ENCODE measurements at regions of chr7 and their contacts with region 1.

Region 1: DNA sequence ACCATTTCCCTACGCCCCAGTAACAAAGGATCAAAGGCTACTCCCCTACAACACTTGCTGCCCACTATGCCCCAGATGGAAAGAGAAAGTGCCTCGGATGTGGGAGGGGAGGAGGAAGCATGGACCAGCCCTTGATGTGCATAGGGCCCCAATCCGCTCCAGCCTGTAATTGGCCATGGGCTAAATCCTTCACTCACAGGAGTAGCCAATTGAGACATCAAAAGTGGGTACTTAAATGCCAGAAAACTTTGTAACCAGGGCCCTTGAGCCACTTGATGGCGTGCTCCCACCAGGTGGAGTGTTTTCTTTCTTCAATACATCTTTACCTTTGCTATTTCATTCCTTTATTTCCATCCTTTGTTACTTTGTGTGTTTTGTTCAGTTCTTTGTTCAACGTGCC is 500.5 kb upstream of the LRRN3 start:
- DNase-seq: peak in 3 of 14 experiments; percentile 7 to 15 (median 14)
- ATAC-seq: no peak
- H3K4me3 ChIP-seq: no peak overlapping the region
- H3K4me3 Mint-ChIP-seq: no peak overlapping the region
- H3K27ac ChIP-seq: no peak overlapping the region
- H3K27ac Mint-ChIP-seq: no peak overlapping the region
- H3K4me1 ChIP-seq: no peaks in the 10 kb centered on the region
- H3K4me1 Mint-ChIP-seq: no peaks in the 10 kb centered on the region
- H3K27me3 ChIP-seq: no peaks in the 10 kb centered on the region
- H3K27me3 Mint-ChIP-seq: no peaks in the 10 kb centered on the region
- CTCF ChIP-seq: no peak

Region 2: GRCh38 chr7:110534241-110534931 is 56.0 kb before region 1 on chr7:
- CTCF ChIA-PET with region 1: no interaction called
- POLR2A ChIA-PET with region 1: no interaction called
- intact Hi-C with region 1: no loop called
- DNase-seq: no peak
- ATAC-seq: no peak
- H3K4me3 ChIP-seq: no peak overlapping the region
- H3K4me3 Mint-ChIP-seq: no peak overlapping the region
- H3K27ac ChIP-seq: no peak overlapping the region
- H3K27ac Mint-ChIP-seq: no peak overlapping the region
- H3K4me1 ChIP-seq: no peaks in the 10 kb centered on the region
- H3K4me1 Mint-ChIP-seq: no peaks in the 10 kb centered on the region
- H3K27me3 ChIP-seq: no peaks in the 10 kb centered on the region
- H3K27me3 Mint-ChIP-seq: no peaks in the 10 kb centered on the region
- CTCF ChIP-seq: no peak

Region 3: DNA sequence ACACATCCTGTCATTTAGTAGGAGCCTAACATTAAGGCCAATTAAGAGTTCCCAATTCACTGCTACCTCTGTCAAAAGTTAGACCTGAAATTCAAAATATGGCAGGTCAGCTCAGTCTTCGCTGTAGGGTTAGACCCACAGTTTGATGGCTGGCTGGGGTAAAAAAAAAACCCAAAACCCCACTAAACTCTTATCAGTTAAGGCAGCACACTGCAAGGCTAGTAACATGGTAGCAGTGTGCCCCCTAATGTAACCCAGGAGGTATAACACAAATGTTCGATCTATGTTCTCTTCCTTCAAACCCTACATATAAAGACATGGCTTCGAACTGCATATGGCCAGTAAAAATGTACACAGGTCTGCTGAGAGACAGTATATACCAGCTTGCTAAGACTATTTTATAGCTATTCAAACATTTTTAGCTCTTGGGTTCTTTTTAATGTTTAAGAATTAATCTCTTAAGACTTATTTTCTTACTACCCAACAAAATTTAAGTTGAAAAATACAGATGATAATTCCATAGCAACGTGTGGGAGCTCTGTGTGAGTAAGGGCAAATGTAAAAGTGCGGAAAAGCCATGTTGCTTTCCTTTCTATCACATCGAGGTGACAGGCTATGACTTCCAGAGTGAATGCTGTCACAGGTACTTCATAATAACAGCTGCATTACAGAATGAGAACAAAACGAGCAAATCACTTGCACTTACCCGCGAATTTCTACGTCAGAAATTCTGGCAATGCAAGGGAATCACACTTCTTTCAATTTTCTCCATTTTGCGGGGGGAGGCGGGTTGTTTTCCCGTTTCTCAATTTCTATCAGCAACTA is 1140.3 kb after region 1 on chr7:
- CTCF ChIA-PET with region 1: no interaction called
- POLR2A ChIA-PET with region 1: no interaction called
- intact Hi-C with region 1: loop called in 1 of 2 experiments (anchors 5 kb)
- DNase-seq: peak in 1 of 14 experiments; percentile 9
- ATAC-seq: no peak
- H3K4me3 ChIP-seq: no peak overlapping the region
- H3K4me3 Mint-ChIP-seq: no peak overlapping the region
- H3K27ac ChIP-seq: no peak overlapping the region
- H3K27ac Mint-ChIP-seq: no peak overlapping the region
- H3K4me1 ChIP-seq: no peaks in the 10 kb centered on the region
- H3K4me1 Mint-ChIP-seq: no peaks in the 10 kb centered on the region
- H3K27me3 ChIP-seq: no peaks in the 10 kb centered on the region
- H3K27me3 Mint-ChIP-seq: peaks cover 6% of the 10 kb centered on the region
- CTCF ChIP-seq: no peak